Stomach (tissue), 19 donors: ENCODE measurements at regions of chr5 and their contacts with region 1.

Region 1: GRCh38 chr5:159106569-159107282 is 7.0 kb upstream of the EBF1 start:
- DNase-seq: peak; percentile 71 to 91
- H3K4me3 ChIP-seq: peak overlapping the region; percentile 28 to 41 (median 35)
- H3K27ac ChIP-seq: no peak overlapping the region
- H3K4me1 ChIP-seq: peaks cover 0 to 34% (median 20%) of the 10 kb centered on the region in 4 donors
- H3K27me3 ChIP-seq: peaks cover 19 to 94% (median 52%) of the 10 kb centered on the region in 3 donors
- CTCF ChIP-seq: peak in 5 of 7 experiments; percentile 71 to 88 (median 80)
- EP300 ChIP-seq: no peak
- POLR2A ChIP-seq: no peak

Region 2: GRCh38 chr5:158074992-158075769 is 1031.5 kb before region 1 on chr5:
- intact Hi-C with region 1: loop called (anchors 10 kb)
- DNase-seq: peak; percentile 44 to 94
- H3K4me3 ChIP-seq: peak overlapping the region; percentile 22 to 32 (median 28)
- H3K27ac ChIP-seq: peak overlapping the region in 1 of 5 donors; percentile 61
- H3K4me1 ChIP-seq: peaks cover 0 to 13% (median 7%) of the 10 kb centered on the region in 4 donors
- H3K27me3 ChIP-seq: peaks cover 0 to 3% (median 0%) of the 10 kb centered on the region in 3 donors
- CTCF ChIP-seq: peak in 5 of 7 experiments; percentile 30 to 77 (median 61)
- EP300 ChIP-seq: no peak
- POLR2A ChIP-seq: no peak

Region 3: DNA sequence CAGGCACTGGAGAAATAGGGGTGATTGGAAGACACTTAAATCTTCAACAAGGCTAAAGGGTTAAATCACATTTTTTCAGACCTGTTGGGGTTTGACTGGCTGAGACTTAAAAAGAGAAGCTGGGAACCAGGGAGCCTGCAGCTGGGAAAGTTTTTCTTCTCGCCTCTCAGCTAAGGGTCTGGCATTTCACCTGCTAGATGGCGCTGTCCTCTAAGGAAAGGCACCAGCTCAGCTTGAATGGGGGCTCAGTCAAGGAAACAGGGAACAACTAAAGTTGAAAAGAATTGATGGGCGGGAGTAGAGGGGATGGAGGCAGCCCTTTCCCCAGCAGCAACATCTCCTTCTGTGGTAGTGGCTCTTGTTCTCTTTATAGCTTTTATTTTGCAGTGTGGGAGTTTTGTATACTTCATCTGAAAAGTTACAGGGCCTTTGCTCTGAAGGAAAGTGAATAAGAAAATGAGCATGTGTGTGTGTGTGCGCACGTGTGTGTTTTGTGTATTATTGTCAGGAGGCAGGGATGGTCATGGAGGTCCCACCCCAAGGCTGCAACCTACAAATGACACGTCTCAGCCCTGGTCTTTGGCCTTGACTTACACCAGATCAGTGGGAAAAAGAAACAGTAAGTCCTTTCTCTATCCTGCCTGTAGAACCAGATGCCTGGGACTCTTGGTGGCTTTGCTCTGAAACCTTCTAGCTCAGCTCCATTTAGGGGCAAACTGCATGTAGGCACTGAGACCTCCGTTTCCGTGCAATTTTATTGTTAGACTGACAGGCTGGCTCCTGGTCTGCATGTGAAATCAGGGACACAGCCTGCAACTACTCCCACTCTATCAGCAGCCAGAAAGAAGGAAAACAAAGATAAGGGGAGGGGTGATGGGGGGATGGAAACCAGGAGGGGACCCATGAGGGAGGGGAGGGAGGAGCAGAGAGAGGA is 931.5 kb before region 1 on chr5:
- intact Hi-C with region 1: loop called (anchors 10 kb)
- DNase-seq: peak; percentile 67 to 92
- H3K4me3 ChIP-seq: no peak overlapping the region
- H3K27ac ChIP-seq: no peak overlapping the region
- H3K4me1 ChIP-seq: peaks cover 6 to 21% (median 15%) of the 10 kb centered on the region in 4 donors
- H3K27me3 ChIP-seq: peaks cover 0 to 3% (median 0%) of the 10 kb centered on the region in 3 donors
- CTCF ChIP-seq: peak in 5 of 7 experiments; percentile 45 to 60 (median 56)
- EP300 ChIP-seq: no peak
- POLR2A ChIP-seq: no peak

Region 4: DNA sequence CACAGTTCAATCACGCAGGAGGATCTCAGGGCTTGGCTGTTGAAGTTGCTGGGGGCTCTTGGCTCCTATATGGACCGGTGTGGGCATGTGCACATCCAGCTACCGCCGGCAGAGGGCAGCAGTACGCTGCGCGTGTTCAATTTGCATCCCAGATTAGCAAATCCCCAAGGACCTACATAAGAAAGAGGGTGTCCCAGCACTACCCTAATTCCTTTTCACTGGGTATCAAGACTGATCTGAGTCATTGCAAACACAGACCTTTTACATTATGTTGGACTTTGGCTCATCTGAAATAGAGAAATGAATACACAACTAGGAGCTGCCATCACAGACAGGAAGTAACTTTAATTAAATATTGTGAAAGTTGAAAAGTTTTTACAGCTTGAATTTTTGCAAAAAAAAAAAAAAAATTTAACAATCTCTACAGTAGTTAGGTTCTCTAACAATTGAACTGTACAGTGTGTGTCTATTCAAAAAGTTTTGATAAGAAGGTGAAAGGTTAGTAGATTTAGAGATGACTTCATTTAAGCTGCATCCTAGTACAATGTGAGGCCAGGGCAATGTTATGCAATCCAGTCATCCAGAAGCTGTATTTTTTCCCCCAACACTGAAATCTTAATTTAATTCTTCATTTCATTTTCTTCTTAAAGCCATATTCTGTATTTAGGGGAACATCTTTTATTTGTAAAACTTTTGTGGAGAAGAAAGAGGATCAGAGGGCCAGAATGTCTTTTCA is 411.0 kb before region 1 on chr5:
- intact Hi-C with region 1: loop called (anchors 2 kb)
- DNase-seq: peak; percentile 79 to 88
- H3K4me3 ChIP-seq: no peak overlapping the region
- H3K27ac ChIP-seq: no peak overlapping the region
- H3K4me1 ChIP-seq: peaks cover 0 to 3% (median 1%) of the 10 kb centered on the region in 4 donors
- H3K27me3 ChIP-seq: peaks cover 0 to 24% (median 0%) of the 10 kb centered on the region in 3 donors
- CTCF ChIP-seq: peak in 5 of 7 experiments; percentile 87 to 99 (median 96)
- EP300 ChIP-seq: no peak
- POLR2A ChIP-seq: no peak

Region 5: GRCh38 chr5:158848634-158849033 is 258.1 kb before region 1 on chr5:
- intact Hi-C with region 1: no loop called
- DNase-seq: no peak
- H3K4me3 ChIP-seq: no peak overlapping the region
- H3K27ac ChIP-seq: no peak overlapping the region
- H3K4me1 ChIP-seq: no peaks in the 10 kb centered on the region
- H3K27me3 ChIP-seq: peaks cover 0 to 8% (median 0%) of the 10 kb centered on the region in 3 donors
- CTCF ChIP-seq: no peak
- EP300 ChIP-seq: no peak
- POLR2A ChIP-seq: no peak